Heart right ventricle (tissue), 16 donors: ENCODE measurements at regions of chr1 and their contacts with region 1.

Region 1: GRCh38 chr1:244970661-244971551 is 106.6 kb upstream of the HNRNPU start:
- DNase-seq: peak; percentile 95
- ATAC-seq: peak; percentile 88 to 95 (median 89)
- H3K4me3 ChIP-seq: peak overlapping the region; percentile 44 to 80 (median 71)
- H3K27ac ChIP-seq: peak overlapping the region; percentile 97 to 100 (median 100)
- H3K4me1 ChIP-seq: peaks cover 0 to 26% (median 19%) of the 10 kb centered on the region in 9 donors
- H3K27me3 ChIP-seq: no peaks in the 10 kb centered on the region
- CTCF ChIP-seq: peak; percentile 37 to 86 (median 66)

Region 2: DNA sequence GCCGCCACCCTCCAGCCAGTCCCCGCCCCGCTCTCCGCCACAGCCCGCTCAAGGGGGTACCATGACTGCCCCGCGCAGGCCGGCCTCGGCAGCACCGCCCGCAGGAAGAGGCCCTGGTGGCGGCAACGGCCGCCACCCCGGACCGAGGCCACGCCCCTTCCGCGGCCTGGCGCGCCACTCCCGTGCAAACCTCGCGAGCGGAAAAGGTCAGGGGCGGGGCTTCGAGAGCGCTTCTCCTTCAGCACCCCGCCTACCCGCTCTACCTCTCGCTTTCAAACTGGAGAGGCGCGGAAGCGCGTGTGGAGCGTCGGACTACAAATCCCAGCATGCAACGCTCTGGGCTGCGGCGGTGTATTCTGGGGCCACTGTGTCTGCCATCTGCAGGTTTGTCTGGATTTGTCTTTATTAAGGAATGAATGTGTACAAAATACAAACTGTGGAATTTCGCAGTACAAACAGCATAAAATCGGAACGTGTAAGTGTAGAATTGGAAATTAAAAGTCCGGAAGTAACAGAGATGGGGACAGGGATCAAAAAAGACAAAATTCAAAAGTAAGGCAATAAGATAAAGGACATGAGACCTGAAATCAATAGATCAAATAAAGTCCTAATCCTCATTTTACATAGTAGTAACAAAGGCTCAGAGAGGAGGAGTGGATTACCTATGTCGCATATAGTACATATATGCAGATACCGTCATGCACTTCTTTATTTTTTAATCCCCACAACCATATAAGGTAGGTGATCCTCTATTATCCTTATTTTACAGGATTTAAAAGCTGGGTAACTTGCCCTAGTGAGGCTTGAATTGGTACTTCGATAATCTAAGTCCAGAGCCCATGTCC is 518.7 kb before region 1 on chr1:
- intact Hi-C with region 1: loop called in 2 of 10 experiments (anchors 5 to 10 kb)
- DNase-seq: peak; percentile 99
- ATAC-seq: peak; percentile 97 to 100 (median 98)
- H3K4me3 ChIP-seq: peak overlapping the region in 9 of 10 donors; percentile 75 to 97 (median 85)
- H3K27ac ChIP-seq: peak overlapping the region in 9 of 10 donors; percentile 90 to 97 (median 95)
- H3K4me1 ChIP-seq: peaks cover 4 to 35% (median 16%) of the 10 kb centered on the region in 9 donors
- H3K27me3 ChIP-seq: no peaks in the 10 kb centered on the region
- CTCF ChIP-seq: peak; percentile 26 to 71 (median 50)

Region 3: DNA sequence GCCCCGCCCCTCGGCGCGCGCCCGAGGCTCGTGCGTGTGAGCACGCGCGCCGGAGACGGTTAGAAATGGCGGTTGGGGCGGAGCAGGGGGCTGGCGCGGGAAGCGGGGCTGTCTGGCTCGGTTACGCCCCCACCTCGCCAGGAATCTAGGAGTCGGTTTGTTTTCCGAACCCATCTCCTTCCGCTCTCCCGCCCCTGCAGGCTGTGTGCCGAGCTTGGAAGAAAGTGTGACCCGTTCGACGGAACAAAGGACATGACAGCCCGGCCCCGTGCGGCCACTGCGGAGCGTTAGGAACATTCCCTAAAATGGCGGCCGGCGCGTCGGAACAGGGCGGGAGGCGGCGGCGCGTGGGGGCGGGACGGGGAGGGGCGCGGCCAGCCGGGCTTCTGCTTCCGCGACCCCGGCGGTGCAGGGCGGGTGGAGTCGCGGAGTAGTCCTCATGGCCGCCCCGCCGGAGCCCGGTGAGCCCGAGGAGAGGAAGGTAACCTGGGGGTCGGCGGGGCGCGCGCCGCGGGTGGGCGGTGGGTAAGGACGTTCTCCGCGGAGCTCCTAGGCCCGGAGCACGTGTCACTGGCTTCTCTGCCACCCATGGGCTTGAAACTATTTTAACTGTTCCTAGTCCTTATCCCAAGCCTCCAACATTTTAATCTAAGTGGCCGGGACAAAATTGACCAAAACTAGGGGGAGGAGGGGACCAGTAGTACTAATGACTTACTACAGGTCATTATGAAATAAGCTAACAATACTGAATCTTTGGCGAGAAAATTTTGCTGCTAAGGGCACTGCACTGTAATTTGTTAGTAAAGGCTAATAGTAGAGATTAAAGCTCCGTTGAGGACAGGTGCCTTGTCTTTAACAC is 135.4 kb before region 1 on chr1 and contains the start of gene COX20:
- intact Hi-C with region 1: loop called in 8 of 10 experiments (anchors 1 to 10 kb)
- DNase-seq: peak; percentile 89 to 92
- ATAC-seq: peak; percentile 83 to 95 (median 91)
- H3K4me3 ChIP-seq: peak within 1 kb of the TSS; percentile 49 to 90 (median 76)
- H3K27ac ChIP-seq: peak within 1 kb of the TSS; percentile 96 to 100 (median 99)
- H3K4me1 ChIP-seq: peaks cover 0 to 51% (median 45%) of the 10 kb centered on the region in 9 donors
- H3K27me3 ChIP-seq: no peaks in the 10 kb centered on the region
- CTCF ChIP-seq: peak in 3 of 9 donors; percentile 6 to 21 (median 8)
- total RNA-seq, gene COX20: 56.6 to 94.1 (median 64.4) TPM

Region 4: GRCh38 chr1:244918421-244919319 is 52.2 kb before region 1 on chr1:
- intact Hi-C with region 1: loop called in 1 of 10 experiments (anchors 5 kb)
- DNase-seq: peak; percentile 29 to 38
- ATAC-seq: peak; percentile 84 to 96 (median 92)
- H3K4me3 ChIP-seq: peak overlapping the region; percentile 13 to 62 (median 55)
- H3K27ac ChIP-seq: peak overlapping the region in 7 of 10 donors; percentile 30 to 74 (median 57)
- H3K4me1 ChIP-seq: peaks cover 0 to 31% (median 13%) of the 10 kb centered on the region in 9 donors
- H3K27me3 ChIP-seq: peaks cover 0 to 6% (median 0%) of the 10 kb centered on the region in 7 donors
- CTCF ChIP-seq: peak in 5 of 9 donors; percentile 11 to 47 (median 20)

Region 5: GRCh38 chr1:245045087-245045881 is 74.4 kb after region 1 on chr1:
- intact Hi-C with region 1: loop called in 5 of 10 experiments (anchors 1 to 5 kb)
- DNase-seq: peak in 1 of 2 donors; percentile 74
- ATAC-seq: peak; percentile 34 to 84 (median 62)
- H3K4me3 ChIP-seq: peak overlapping the region in 2 of 10 donors; percentile 1 to 8
- H3K27ac ChIP-seq: peak overlapping the region in 6 of 10 donors; percentile 2 to 56 (median 34)
- H3K4me1 ChIP-seq: peaks cover 0 to 43% (median 13%) of the 10 kb centered on the region in 9 donors
- H3K27me3 ChIP-seq: no peaks in the 10 kb centered on the region
- CTCF ChIP-seq: no peak